ENCODE measurements at regions of chr2 and their contacts with region 1.

Region 1: GRCh38 chr2:227471924-227472264 is at the start of gene AGFG1:
- DNase-seq: peak; percentile 87 to 95
- ATAC-seq: peak; percentile 95
- H3K4me3 ChIP-seq: peak within 1 kb of the TSS; percentile 85 to 98
- H3K27ac ChIP-seq: peak within 1 kb of the TSS; percentile 49 to 85
- H3K4me1 ChIP-seq: peaks cover 0 to 2% of the 10 kb centered on the region in 2 donors
- H3K27me3 ChIP-seq: no peaks in the 10 kb centered on the region
- total RNA-seq, gene AGFG1: 81.3 to 82.9 TPM

Region 2: GRCh38 chr2:227515742-227516141 is 43.8 kb after region 1 on chr2:
- intact Hi-C with region 1: loop called (anchors 5 kb)
- DNase-seq: no peak
- ATAC-seq: no peak
- H3K4me3 ChIP-seq: no peak overlapping the region
- H3K27ac ChIP-seq: no peak overlapping the region
- H3K4me1 ChIP-seq: peaks cover 4 to 9% of the 10 kb centered on the region in 2 donors
- H3K27me3 ChIP-seq: no peaks in the 10 kb centered on the region

Region 3: GRCh38 chr2:227766373-227766883 is 294.5 kb after region 1 on chr2:
- intact Hi-C with region 1: loop called in 1 of 2 experiments (anchors 10 kb)
- DNase-seq: peak; percentile 82 to 91
- ATAC-seq: peak; percentile 94
- H3K4me3 ChIP-seq: no peak overlapping the region
- H3K27ac ChIP-seq: no peak overlapping the region
- H3K4me1 ChIP-seq: no peaks in the 10 kb centered on the region
- H3K27me3 ChIP-seq: no peaks in the 10 kb centered on the region